GM23248 (cell line): ENCODE measurements at regions of chr10 and their contacts with region 1.

Region 1: GRCh38 chr10:107814865-107815487 is 650.5 kb upstream of the SORCS1 start:
- DNase-seq: peak; percentile 82
- H3K4me3 ChIP-seq: no peak overlapping the region
- H3K27ac ChIP-seq: no peak overlapping the region
- H3K4me1 ChIP-seq: no peaks in the 10 kb centered on the region
- H3K27me3 ChIP-seq: no peaks in the 10 kb centered on the region

Region 2: GRCh38 chr10:106705681-106706100 is 1109.3 kb before region 1 on chr10:
- in situ Hi-C with region 1: loop called (anchors 25 kb)
- DNase-seq: peak; percentile 75
- H3K4me3 ChIP-seq: peak overlapping the region; percentile 57
- H3K27ac ChIP-seq: no peak overlapping the region
- H3K4me1 ChIP-seq: no peaks in the 10 kb centered on the region
- H3K27me3 ChIP-seq: no peaks in the 10 kb centered on the region; the same call in 1 of the 2 replicates

Region 3: GRCh38 chr10:107409522-107409921 is 405.5 kb before region 1 on chr10:
- in situ Hi-C with region 1: loop called (anchors 10 kb)
- DNase-seq: peak; percentile 65
- H3K4me3 ChIP-seq: no peak overlapping the region
- H3K27ac ChIP-seq: no peak overlapping the region
- H3K4me1 ChIP-seq: no peaks in the 10 kb centered on the region
- H3K27me3 ChIP-seq: no peaks in the 10 kb centered on the region

Region 4: GRCh38 chr10:108404155-108404554 is 589.2 kb after region 1 on chr10:
- in situ Hi-C with region 1: no loop called
- DNase-seq: no peak
- H3K4me3 ChIP-seq: no peak overlapping the region
- H3K27ac ChIP-seq: no peak overlapping the region
- H3K4me1 ChIP-seq: no peaks in the 10 kb centered on the region
- H3K27me3 ChIP-seq: no peaks in the 10 kb centered on the region